CD4-positive, alpha-beta T cell (primary cell): ENCODE measurements at regions of chr17 and their contacts with region 1.

Region 1: GRCh38 chr17:19977311-19978208 is at the start of gene AKAP10:
- DNase-seq: peak; percentile 85 to 94 (median 91)
- ATAC-seq: peak; percentile 83
- H3K4me3 ChIP-seq: peak within 1 kb of the TSS; percentile 83
- H3K4me3 Mint-ChIP-seq: peak within 1 kb of the TSS; percentile 99
- H3K27ac ChIP-seq: peak within 1 kb of the TSS; percentile 83 to 85
- H3K27ac Mint-ChIP-seq: peak within 1 kb of the TSS; percentile 97
- H3K4me1 ChIP-seq: peaks cover 43% of the 10 kb centered on the region
- H3K4me1 Mint-ChIP-seq: peaks cover 59% of the 10 kb centered on the region
- H3K27me3 ChIP-seq: no peaks in the 10 kb centered on the region
- H3K27me3 Mint-ChIP-seq: no peaks in the 10 kb centered on the region
- CTCF ChIP-seq: no peak
- total RNA-seq, gene AKAP10: 29.2 to 36.0 TPM

Region 2: DNA sequence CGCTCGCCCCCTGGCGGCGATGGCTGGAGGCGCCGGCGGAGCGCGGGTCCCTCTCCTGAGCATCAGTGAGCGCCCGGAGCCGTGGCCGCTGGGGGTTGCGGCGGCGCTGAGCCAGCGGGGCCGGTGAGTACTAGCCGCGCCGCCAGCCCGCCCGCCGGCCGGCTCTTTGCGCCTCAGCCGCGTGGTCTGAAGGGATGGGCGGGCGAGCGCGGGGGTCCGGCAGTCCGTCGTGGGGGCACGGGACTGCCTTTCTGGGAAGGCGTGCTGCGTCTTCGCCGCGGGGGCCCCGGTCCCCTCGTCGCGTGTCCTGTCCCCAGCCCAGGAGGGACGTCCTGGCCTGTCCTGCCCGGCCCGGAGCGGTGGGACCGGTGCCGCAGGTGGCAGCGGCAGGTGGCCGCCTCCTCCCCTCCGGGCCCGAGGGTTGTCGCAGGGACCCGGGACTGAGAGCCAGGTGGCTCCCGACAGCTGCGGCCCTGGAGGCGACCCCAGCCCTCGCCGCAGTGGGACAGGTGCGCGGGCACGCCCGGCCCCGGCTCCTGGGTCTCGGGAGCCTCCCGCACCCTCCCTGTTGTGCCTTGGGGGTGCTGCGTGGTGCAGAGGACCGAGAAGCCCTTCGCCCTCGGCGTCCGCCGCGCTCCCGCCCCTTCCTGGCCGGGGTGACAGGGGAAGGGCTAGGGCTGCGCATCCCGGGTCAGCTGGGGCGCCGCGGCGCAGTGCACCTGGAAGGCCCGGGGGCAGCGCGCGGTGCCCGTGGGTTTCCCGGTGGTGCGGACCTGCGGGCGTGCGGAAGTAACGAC is 31.9 kb after region 1 on chr17 and contains the start of gene SPECC1:
- CTCF ChIA-PET with region 1: interaction called, 19 read pairs
- POLR2A ChIA-PET with region 1: interaction called, 3 read pairs
- intact Hi-C with region 1: loop called in 1 of 2 experiments (anchors 2 kb)
- DNase-seq: peak; percentile 62 to 91 (median 84)
- ATAC-seq: peak; percentile 98
- H3K4me3 ChIP-seq: peak within 1 kb of the TSS; percentile 78
- H3K4me3 Mint-ChIP-seq: peak within 1 kb of the TSS; percentile 93
- H3K27ac ChIP-seq: no peak within 1 kb of the TSS
- H3K27ac Mint-ChIP-seq: no peak within 1 kb of the TSS
- H3K4me1 ChIP-seq: peaks cover 18% of the 10 kb centered on the region
- H3K4me1 Mint-ChIP-seq: peaks cover 20% of the 10 kb centered on the region
- H3K27me3 ChIP-seq: peaks cover 7 to 44% of the 10 kb centered on the region in 2 experiments
- H3K27me3 Mint-ChIP-seq: peaks cover 70% of the 10 kb centered on the region
- CTCF ChIP-seq: peak; percentile 96
- total RNA-seq, gene SPECC1: 4.3 to 4.4 TPM

Region 3: DNA sequence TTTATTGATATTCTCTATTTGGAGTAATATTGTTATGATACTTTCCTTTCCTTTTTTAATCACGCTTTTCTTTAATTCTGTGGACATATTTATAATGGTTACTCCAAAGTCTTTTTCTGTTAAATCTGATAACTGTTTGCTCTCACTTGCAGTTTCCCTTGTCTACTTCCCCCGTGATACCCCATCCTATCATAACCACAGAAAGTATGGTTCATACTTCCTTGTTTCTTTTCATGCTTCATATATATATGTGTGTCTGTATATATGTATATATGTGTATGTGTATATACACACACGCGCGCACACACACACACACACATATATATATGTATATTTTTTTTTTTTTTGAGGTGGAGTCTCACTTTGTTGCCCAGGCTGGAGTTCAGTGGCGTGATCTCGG is 55.1 kb after region 1 on chr17:
- CTCF ChIA-PET with region 1: no interaction called
- POLR2A ChIA-PET with region 1: no interaction called
- intact Hi-C with region 1: no loop called
- DNase-seq: no peak
- ATAC-seq: no peak
- H3K4me3 ChIP-seq: no peak overlapping the region
- H3K4me3 Mint-ChIP-seq: no peak overlapping the region
- H3K27ac ChIP-seq: no peak overlapping the region
- H3K27ac Mint-ChIP-seq: no peak overlapping the region
- H3K4me1 ChIP-seq: no peaks in the 10 kb centered on the region
- H3K4me1 Mint-ChIP-seq: no peaks in the 10 kb centered on the region
- H3K27me3 ChIP-seq: no peaks in the 10 kb centered on the region
- H3K27me3 Mint-ChIP-seq: peaks cover 4% of the 10 kb centered on the region
- CTCF ChIP-seq: no peak